WTC11 (cell line): ENCODE measurements at regions of chr14 and their contacts with region 1.

Region 1: GRCh38 chr14:59576332-59577294 is at the start of gene CCDC175:
- DNase-seq: peak; percentile 95
- ATAC-seq: peak; percentile 98
- H3K4me3 Mint-ChIP-seq: peak within 1 kb of the TSS; percentile 79
- H3K27ac Mint-ChIP-seq: no peak within 1 kb of the TSS
- H3K4me1 Mint-ChIP-seq: no peaks in the 10 kb centered on the region
- H3K27me3 Mint-ChIP-seq: no peaks in the 10 kb centered on the region
- CTCF ChIP-seq: peak; percentile 87
- total RNA-seq, gene CCDC175: 0.16 to 0.27 TPM in 2 of 3 replicates, not detected in the other

Region 2: GRCh38 chr14:59450716-59451115 is 125.9 kb before region 1 on chr14:
- CTCF ChIA-PET with region 1: no interaction called
- POLR2A ChIA-PET with region 1: no interaction called
- DNase-seq: no peak
- ATAC-seq: no peak
- H3K4me3 Mint-ChIP-seq: no peak overlapping the region
- H3K27ac Mint-ChIP-seq: no peak overlapping the region
- H3K4me1 Mint-ChIP-seq: no peaks in the 10 kb centered on the region
- H3K27me3 Mint-ChIP-seq: no peaks in the 10 kb centered on the region
- CTCF ChIP-seq: no peak

Region 3: DNA sequence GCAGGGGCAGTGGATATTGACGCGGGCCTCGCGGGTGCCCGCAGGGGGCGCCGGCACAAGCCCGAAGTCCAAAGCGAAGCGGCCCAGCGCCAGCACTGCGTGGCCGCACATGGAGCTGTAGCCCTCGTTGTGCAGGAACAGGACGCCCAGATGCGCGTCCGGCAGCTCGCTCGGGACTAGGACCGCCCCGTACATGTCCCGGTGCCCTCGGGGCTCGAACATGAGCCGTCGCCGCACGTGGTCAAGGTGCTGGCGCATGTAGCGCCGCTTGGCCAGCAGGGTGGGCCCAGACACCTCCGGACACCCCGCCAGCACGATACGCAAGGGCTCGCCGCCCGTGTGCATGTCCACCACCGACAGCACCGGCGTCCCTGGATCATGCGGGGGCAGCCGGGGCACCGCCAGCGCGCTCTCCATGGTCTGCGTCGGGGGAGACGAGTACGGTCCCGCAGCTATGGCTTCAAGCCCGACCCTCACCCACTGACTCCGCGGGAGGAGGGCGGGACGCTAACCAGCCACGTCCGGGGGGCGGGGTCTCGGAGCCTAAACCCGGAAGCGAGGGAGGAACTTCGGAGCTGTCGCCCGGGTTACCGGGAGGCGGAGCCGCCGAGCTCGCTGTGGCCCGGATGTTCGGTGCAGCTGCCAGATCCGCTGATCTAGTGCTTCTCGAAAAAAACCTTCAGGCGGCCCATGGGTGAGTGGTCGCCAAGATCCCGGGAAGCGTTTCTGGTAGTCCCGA is 92.5 kb before region 1 on chr14 and contains the starts of genes JKAMP and L3HYPDH:
- CTCF ChIA-PET with region 1: interaction called, 36 read pairs
- POLR2A ChIA-PET with region 1: no interaction called
- DNase-seq: peak; percentile 98
- ATAC-seq: peak; percentile 94
- H3K4me3 Mint-ChIP-seq: peak within 1 kb of the TSS; percentile 83
- H3K27ac Mint-ChIP-seq: peak within 1 kb of the TSS; percentile 87
- H3K4me1 Mint-ChIP-seq: peaks cover 19% of the 10 kb centered on the region
- H3K27me3 Mint-ChIP-seq: no peaks in the 10 kb centered on the region
- CTCF ChIP-seq: no peak
- total RNA-seq, gene JKAMP: 29.1 to 33.2 TPM (median 31.7 TPM) in 3 replicates
- total RNA-seq, gene L3HYPDH: 14.3 to 17.5 TPM (median 16.6 TPM) in 3 replicates

Region 4: DNA sequence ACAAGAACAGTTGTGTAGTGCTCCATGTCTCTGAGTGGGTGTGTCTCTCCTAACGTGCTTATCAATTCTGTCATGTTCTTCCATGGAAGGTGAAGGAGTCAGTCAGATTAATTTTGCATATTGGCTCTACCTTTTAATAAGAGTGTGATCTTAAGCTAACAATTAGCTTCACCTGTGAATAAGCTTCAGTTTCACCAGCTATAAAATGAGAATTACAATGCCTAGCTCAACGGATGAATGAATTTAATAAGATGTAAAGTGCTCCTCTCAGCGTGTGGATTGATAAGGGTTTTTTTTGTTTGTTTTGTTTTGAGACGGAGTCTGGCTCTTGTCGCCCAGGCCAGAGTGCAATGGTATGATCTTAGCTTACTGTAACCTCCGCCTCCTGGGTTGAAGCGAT is 32.7 kb before region 1 on chr14:
- CTCF ChIA-PET with region 1: interaction called, 15 read pairs
- POLR2A ChIA-PET with region 1: interaction called, 3 read pairs
- DNase-seq: no peak
- ATAC-seq: no peak
- H3K4me3 Mint-ChIP-seq: no peak overlapping the region
- H3K27ac Mint-ChIP-seq: no peak overlapping the region
- H3K4me1 Mint-ChIP-seq: peaks cover 16% of the 10 kb centered on the region
- H3K27me3 Mint-ChIP-seq: no peaks in the 10 kb centered on the region; the same call in 1 of the 2 replicates
- CTCF ChIP-seq: no peak

Region 5: DNA sequence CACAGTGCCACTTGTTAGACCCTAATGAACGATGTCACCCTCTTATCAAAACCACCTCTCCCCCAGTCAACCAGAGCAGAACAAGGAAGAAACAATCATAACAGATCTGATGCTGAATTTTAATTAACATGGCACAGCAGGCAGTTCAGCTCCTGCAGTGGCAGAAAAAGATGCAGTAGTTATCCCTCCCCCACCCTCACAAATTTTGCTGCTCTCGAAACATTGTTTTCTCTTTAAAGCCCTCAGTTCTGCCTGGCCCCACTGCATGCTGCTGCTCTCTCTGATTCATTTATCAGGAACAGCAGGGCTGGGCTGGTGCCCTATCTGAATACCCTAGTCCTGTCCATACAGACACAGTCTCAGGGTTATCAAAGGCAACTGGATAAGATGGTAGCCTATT is 12.2 kb before region 1 on chr14:
- CTCF ChIA-PET with region 1: interaction called, 44 read pairs
- POLR2A ChIA-PET with region 1: no interaction called
- DNase-seq: no peak
- ATAC-seq: peak; percentile 60
- H3K4me3 Mint-ChIP-seq: no peak overlapping the region
- H3K27ac Mint-ChIP-seq: no peak overlapping the region
- H3K4me1 Mint-ChIP-seq: peaks cover 29% of the 10 kb centered on the region
- H3K27me3 Mint-ChIP-seq: no peaks in the 10 kb centered on the region
- CTCF ChIP-seq: no peak

Region 6: DNA sequence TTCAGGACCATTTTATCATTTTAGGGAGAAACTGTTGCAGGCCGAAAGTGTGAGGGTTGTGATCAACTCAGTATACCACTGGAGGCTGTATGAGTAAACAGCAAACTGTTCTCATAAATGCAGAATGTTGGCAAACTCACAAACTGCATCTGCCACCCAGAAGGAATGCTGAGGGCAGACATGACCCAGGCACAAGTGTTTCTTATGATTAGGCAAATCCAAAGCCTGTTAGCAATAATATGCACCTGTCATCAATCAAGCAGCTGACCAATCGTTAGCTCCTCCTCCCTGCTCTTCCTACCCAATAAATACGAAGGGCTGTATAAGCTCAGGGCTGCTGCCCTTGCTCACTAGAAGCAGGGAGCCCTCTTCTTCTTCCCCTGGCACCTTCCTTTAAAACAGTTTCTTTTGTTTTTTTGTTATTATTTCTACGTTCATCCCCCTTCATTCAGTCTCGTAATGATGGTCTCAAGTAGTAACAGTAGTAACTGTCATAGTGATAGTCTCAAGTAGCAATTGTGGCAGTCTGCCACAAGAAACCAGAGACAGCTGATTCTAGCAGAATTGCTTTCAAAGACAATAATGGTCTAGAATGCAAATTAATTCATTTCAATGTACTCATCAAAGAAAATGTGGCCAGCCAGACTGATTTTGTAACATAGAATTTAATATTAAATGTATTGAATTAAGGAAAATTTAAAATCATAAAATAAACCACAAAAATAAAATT is 15.2 kb after region 1 on chr14:
- CTCF ChIA-PET with region 1: interaction called, 18 read pairs
- POLR2A ChIA-PET with region 1: no interaction called
- DNase-seq: no peak
- ATAC-seq: no peak
- H3K4me3 Mint-ChIP-seq: no peak overlapping the region
- H3K27ac Mint-ChIP-seq: no peak overlapping the region
- H3K4me1 Mint-ChIP-seq: no peaks in the 10 kb centered on the region
- H3K27me3 Mint-ChIP-seq: no peaks in the 10 kb centered on the region
- CTCF ChIP-seq: no peak

Region 7: GRCh38 chr14:59688224-59689170 is 111.9 kb after region 1 on chr14:
- CTCF ChIA-PET with region 1: no interaction called
- POLR2A ChIA-PET with region 1: no interaction called
- DNase-seq: peak; percentile 76
- ATAC-seq: peak; percentile 100
- H3K4me3 Mint-ChIP-seq: no peak overlapping the region
- H3K27ac Mint-ChIP-seq: no peak overlapping the region
- H3K4me1 Mint-ChIP-seq: peaks cover 3% of the 10 kb centered on the region
- H3K27me3 Mint-ChIP-seq: no peaks in the 10 kb centered on the region
- CTCF ChIP-seq: peak; percentile 68

Region 8: GRCh38 chr14:59890676-59891075 is 314.1 kb after region 1 on chr14:
- CTCF ChIA-PET with region 1: no interaction called
- POLR2A ChIA-PET with region 1: no interaction called
- DNase-seq: no peak
- ATAC-seq: no peak
- H3K4me3 Mint-ChIP-seq: no peak overlapping the region
- H3K27ac Mint-ChIP-seq: no peak overlapping the region
- H3K4me1 Mint-ChIP-seq: no peaks in the 10 kb centered on the region
- H3K27me3 Mint-ChIP-seq: peaks cover 3% of the 10 kb centered on the region; the same call in 1 of the 2 replicates
- CTCF ChIP-seq: no peak

Region 9: DNA sequence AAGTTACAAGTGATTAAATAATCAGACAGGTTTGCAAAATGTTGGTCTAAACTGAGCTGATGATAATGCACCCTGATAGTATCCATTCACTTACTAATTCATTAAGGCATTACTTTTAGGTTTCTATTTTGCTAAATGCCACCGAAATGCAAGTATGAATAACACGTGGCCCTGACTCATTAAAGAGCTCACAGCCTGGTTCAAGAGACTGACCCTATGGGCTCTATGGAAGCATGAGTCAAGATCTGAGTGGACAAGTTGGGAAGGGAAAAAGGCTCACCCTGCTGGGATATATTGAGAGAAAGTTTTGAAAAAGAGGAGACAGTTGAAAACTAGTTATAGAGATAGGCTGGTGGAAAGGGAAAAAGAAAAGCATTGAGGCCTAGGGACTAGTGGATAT is 328.6 kb after region 1 on chr14:
- CTCF ChIA-PET with region 1: no interaction called
- POLR2A ChIA-PET with region 1: no interaction called
- DNase-seq: no peak
- ATAC-seq: no peak
- H3K4me3 Mint-ChIP-seq: no peak overlapping the region
- H3K27ac Mint-ChIP-seq: no peak overlapping the region
- H3K4me1 Mint-ChIP-seq: peaks cover 11% of the 10 kb centered on the region
- H3K27me3 Mint-ChIP-seq: no peaks in the 10 kb centered on the region
- CTCF ChIP-seq: no peak